Left cardiac atrium (tissue), 4 donors: ENCODE measurements at regions of chr13 and their contacts with region 1.

Region 1: GRCh38 chr13:44917589-44918325 is 71.5 kb downstream of the NUFIP1 start:
- DNase-seq: peak; percentile 94
- ATAC-seq: peak; percentile 87 to 94

Region 2: GRCh38 chr13:44577236-44578066 is 340.3 kb before region 1 on chr13:
- intact Hi-C with region 1: loop called in 1 of 2 experiments (anchors 5 kb)
- DNase-seq: peak; percentile 98
- ATAC-seq: peak; percentile 90 to 92

Region 3: DNA sequence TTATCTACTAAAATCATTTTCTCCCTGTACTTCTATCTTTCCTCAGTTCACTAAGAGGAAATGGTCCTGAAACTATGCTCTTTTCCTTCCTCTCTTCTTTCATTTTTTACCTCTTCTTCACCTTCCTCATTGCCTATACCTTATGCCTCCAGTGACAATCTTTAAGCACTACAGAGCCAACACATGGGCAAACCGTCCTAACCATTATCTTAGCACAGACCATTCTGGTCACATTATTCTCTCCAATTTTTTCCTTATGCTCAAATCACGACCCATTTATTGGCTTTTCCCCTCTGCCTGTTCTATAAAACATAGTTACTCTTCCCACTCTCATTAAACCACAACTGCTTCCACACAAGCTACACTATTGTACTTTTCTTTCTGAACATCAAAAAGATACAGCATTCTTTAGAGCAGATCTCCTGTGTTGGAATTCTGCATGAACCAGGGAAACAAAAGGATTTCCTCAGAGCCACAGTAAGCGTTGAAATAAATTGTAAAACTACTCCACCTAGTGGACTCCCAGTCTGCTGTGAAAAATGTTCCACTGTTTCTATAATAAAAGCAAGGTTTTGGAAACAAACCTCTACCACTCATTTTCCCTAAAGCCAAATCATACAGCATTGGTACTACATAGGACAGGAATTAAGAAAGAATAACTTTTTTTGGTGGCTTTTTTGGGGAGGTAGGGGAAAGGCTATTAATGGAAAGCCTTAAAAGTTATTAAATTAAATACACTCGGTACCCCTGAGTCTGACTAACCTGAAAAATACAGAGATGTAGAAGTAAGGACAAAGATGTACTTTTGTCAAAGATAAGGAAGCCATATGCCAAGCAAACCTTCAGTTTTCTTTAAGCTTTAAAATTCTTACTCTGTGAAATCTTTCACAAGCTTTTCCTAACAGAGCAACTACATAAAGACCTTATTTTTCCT is 52.1 kb after region 1 on chr13:
- intact Hi-C with region 1: loop called in 1 of 2 experiments (anchors 5 kb)
- DNase-seq: no peak
- ATAC-seq: peak; percentile 55 to 74

Region 4: GRCh38 chr13:45320876-45321629 is 403.3 kb after region 1 on chr13:
- intact Hi-C with region 1: no loop called
- DNase-seq: no peak
- ATAC-seq: peak in 1 of 2 donors; percentile 5